PC-9 (cell line): ENCODE measurements at regions of chr4 and their contacts with region 1.

Region 1: DNA sequence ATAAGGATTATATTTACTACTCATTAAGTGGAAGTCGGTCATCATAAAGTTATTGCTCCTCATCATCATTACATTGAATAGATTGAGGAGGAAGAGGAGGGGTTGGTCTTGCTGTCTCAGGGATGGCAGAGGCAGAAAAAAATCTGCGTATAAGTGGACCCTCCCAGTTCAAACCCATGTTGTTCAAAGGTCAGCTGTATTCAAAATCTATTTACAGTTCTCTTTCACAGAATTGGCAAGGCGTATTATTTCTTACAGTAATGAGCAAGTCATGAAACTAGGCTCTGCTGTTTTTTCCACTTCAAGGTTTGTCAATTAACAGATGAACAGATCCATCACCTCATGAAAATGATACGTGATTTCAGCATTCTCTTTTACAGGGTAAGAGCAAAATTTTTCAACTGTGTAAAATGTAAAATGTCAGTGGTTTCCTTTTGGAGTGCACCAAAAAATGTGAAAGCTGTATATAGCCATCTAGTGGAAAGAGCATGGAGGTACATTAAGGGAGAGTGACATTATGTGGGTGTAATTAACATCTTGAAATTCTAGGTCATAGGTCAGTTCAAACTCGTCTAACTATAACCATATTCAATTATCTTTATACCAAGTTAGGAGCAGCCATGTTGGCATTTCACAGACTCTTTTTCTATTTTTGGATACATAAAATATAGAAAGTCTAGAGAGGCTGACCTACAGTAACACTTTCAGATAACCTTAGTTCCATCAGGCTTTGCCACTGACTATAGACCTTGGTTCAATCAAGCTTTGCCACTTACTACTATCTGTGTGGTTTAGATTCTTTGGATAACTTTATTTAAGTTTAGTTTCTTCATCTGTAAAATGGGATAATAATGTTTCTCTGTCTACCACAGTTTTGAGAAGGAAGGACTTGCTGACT is 30.1 kb downstream of the NEIL3 start:
- DNase-seq: peak in 1 of 2 experiments; percentile 37
- H3K4me3 ChIP-seq: no peak overlapping the region
- H3K27ac ChIP-seq: no peak overlapping the region
- H3K4me1 ChIP-seq: no peaks in the 10 kb centered on the region
- H3K27me3 ChIP-seq: no peaks in the 10 kb centered on the region
- CTCF ChIP-seq: peak; percentile 69

Region 2: DNA sequence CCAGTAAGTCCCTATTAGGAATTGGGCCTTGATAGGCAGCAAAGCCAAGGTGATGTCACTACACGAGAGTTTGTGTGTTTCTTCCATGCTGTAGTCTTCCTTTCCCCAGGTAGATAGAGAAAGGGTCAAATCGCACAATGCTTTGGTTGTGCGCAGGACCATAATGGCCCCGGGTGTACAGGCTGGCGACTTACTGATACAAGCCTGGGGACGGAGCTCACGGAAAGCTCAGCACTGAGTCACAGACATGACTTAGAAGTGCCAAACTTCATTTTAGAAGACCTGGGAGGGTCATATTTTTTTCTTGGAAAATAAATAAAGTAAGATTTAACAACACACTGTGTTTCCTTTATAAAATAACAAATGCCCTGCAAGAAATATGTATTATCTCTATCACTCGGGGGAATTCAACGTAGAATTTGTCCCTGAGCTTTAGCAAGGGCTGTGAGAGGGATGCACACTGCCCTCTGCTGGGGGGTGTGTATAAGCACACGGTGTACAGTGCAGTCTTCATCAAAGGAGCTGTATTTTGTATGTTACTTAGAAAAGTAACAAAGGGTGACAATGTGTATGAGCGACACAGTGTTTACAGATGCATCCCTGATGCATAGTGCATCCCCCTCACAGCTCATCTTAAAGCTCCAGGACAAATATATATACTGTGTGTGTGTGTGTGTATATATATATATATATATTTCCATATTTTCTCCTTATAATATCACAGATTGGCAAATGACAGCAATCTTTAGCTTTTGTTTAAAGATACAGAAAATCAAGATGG is 292.5 kb before region 1 on chr4:
- CTCF ChIA-PET with region 1: no interaction called
- POLR2A ChIA-PET with region 1: no interaction called
- intact Hi-C with region 1: loop called (anchors 10 kb)
- DNase-seq: peak in 1 of 2 experiments; percentile 54
- H3K4me3 ChIP-seq: no peak overlapping the region
- H3K27ac ChIP-seq: no peak overlapping the region
- H3K4me1 ChIP-seq: no peaks in the 10 kb centered on the region
- H3K27me3 ChIP-seq: no peaks in the 10 kb centered on the region
- CTCF ChIP-seq: peak; percentile 85

Region 3: GRCh38 chr4:177356206-177356605 is 16.5 kb after region 1 on chr4:
- CTCF ChIA-PET with region 1: no interaction called
- POLR2A ChIA-PET with region 1: interaction called, 10 read pairs
- intact Hi-C with region 1: no loop called
- DNase-seq: no peak
- H3K4me3 ChIP-seq: no peak overlapping the region
- H3K27ac ChIP-seq: no peak overlapping the region
- H3K4me1 ChIP-seq: no peaks in the 10 kb centered on the region
- H3K27me3 ChIP-seq: no peaks in the 10 kb centered on the region
- CTCF ChIP-seq: no peak

Region 4: DNA sequence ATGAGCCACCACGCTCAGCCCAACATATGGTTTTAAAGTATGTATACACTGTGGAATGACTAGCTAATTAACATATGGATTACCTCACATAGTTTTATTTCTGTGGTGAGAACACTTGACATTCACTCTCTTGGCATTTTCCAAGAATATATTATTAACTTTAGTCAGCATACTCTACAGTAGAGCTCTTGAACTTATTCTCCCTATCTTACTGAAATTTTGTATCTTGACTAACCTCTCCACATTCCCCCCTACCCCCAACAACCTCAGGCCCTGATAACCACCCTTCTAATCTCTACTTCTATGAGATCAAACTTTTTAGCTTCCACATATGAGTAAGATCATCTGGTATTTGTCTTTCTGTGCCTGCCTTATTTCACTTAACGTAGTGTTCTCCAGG is 141.1 kb after region 1 on chr4:
- CTCF ChIA-PET with region 1: no interaction called
- POLR2A ChIA-PET with region 1: no interaction called
- intact Hi-C with region 1: no loop called
- DNase-seq: no peak
- H3K4me3 ChIP-seq: no peak overlapping the region
- H3K27ac ChIP-seq: no peak overlapping the region
- H3K4me1 ChIP-seq: peaks cover 17% of the 10 kb centered on the region
- H3K27me3 ChIP-seq: no peaks in the 10 kb centered on the region
- CTCF ChIP-seq: no peak

Region 5: GRCh38 chr4:178165251-178165950 is 825.7 kb after region 1 on chr4:
- CTCF ChIA-PET with region 1: no interaction called
- POLR2A ChIA-PET with region 1: no interaction called
- intact Hi-C with region 1: no loop called
- DNase-seq: peak; percentile 24 to 35
- H3K4me3 ChIP-seq: no peak overlapping the region
- H3K27ac ChIP-seq: 0 out of 2 replicates have a peak overlapping the region, but pooled peaks have one; percentile 23
- H3K4me1 ChIP-seq: peaks cover 8% of the 10 kb centered on the region; the same call in 1 of the 2 replicates
- H3K27me3 ChIP-seq: no peaks in the 10 kb centered on the region
- CTCF ChIP-seq: no peak